A673 (cell line): ENCODE measurements at regions of chr20 and their contacts with region 1.

Region 1: DNA sequence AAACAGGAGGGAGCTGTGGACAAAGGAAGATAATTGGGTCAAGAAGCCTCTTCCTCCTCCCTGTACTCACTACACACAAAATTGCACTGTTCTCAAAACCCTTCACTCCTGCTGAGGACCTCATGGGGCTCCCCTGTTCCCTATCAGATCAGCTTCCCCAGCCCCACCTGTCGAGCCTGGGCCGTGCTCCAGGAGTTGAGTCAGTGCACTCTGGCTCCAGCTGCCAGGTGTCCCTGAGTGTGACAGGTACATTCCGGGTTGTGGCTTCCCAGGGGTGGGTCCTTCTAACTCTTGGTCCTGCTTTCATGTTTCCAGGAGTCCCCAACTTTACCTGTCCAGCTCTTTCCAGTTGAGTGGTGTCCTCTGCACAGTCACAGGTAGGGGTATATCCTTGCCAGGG is 8.4 kb downstream of the RAB5IF start:
- DNase-seq: no peak
- H3K4me3 ChIP-seq: no peak overlapping the region
- H3K27ac ChIP-seq: no peak overlapping the region
- H3K4me1 ChIP-seq: no peaks in the 10 kb centered on the region
- H3K27me3 ChIP-seq: no peaks in the 10 kb centered on the region
- CTCF ChIP-seq: no peak

Region 2: DNA sequence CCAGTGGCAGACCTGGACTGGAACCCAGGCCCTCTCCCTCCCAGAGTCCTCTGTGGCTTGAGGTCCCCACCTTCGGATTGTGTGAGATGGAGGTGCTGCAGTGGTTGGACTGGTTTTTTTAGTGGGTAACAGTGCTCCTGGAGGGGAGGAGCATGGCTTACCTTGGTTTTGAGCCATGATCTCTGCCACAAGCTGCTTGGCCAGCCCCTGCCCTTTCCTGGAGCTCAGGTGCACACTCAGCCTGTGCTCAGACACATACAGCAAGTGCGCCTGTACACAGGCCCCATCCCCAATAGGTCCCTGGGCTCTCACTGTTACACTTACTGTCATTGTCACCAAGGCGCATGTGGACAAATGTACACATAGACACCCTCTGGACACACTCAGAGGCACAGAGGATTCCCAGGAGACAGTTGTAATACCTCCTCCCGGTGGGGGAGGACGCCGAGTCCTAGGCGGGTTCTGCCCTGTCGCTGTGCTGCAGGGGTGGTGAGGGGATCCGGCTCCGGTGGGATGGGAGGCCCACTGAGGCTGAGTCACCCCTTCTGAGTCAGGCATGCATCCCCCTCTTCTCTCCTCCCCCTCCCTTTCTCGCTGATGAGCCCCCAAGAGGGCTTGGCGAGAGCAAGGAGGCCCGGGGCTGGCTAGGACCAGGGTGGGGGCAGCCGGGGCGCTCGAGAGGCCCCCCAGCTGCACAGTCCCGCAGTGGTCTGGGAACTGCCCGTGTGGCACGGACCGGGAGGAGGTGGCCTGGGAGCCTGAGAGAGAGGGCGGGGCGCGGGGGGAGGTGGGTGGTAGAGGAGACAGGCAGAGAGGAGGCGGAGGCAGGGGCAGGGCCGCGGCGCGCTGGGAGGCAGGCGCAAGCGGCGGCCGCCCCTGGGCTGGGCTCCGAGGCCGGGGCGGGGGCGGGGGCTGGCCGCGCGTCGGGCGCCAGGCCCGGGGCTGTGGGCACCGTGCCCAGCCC is 460.0 kb before region 1 on chr20:
- CTCF ChIA-PET with region 1: no interaction called
- POLR2A ChIA-PET with region 1: no interaction called
- intact Hi-C with region 1: no loop called
- DNase-seq: peak; percentile 77
- H3K4me3 ChIP-seq: peak overlapping the region; percentile 60
- H3K27ac ChIP-seq: no peak overlapping the region
- H3K4me1 ChIP-seq: no peaks in the 10 kb centered on the region
- H3K27me3 ChIP-seq: no peaks in the 10 kb centered on the region
- CTCF ChIP-seq: no peak

Region 3: DNA sequence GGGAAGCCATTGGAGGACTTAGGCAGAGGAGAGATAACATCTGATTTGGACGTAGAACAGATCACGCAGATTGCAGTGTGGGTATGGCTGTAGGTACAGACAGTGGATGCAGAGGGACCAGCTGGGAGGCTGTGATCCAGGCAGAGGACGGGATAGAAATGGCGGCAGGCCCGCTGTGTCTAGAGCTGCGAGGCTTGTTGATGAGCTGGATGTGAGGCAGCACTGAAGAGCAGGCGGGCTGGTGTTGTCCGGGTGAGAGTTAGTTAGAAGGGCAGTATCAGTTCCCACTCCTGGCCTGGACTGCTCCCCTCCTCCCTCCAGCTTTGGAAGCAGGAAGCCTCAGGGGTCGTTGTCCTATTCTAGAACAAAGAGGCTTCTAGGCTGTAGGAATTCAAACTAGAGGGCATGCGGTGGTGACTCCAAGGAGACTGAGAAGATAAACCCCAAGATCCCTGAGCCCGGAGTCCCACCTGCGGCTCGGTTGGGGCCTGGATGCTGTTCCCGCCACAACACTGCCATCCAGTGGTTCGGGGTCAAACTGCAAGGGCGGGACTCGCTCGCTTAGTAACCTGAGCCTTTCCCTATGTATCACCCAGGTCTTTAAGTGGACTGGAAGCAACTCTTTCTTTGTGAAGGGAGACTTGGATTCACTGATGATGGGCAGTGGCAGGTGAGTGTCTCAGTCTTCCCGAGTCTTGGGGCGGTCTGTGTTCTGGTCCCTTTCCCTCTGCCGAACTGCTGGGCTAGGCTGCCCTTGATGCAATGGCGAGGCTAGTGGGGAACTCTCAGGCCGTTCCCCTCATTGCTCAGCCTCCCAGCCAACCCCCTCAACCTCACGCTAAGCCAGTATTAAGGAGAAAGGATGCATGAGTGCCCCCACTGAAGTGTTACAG is 273.1 kb after region 1 on chr20:
- CTCF ChIA-PET with region 1: no interaction called
- POLR2A ChIA-PET with region 1: interaction called, 4 read pairs
- intact Hi-C with region 1: loop called (anchors 2 kb)
- DNase-seq: peak; percentile 88
- H3K4me3 ChIP-seq: no peak overlapping the region
- H3K27ac ChIP-seq: no peak overlapping the region
- H3K4me1 ChIP-seq: peaks cover 5% of the 10 kb centered on the region
- H3K27me3 ChIP-seq: no peaks in the 10 kb centered on the region
- CTCF ChIP-seq: peak; percentile 97

Region 4: GRCh38 chr20:37071481-37071911 is 457.5 kb after region 1 on chr20:
- CTCF ChIA-PET with region 1: no interaction called
- POLR2A ChIA-PET with region 1: no interaction called
- intact Hi-C with region 1: no loop called
- DNase-seq: no peak
- H3K4me3 ChIP-seq: no peak overlapping the region
- H3K27ac ChIP-seq: no peak overlapping the region
- H3K4me1 ChIP-seq: no peaks in the 10 kb centered on the region
- H3K27me3 ChIP-seq: no peaks in the 10 kb centered on the region
- CTCF ChIP-seq: no peak